Endothelial cell of umbilical vein (primary cell): ENCODE measurements at regions of chr19 and their contacts with region 1.

Region 1: GRCh38 chr19:15555759-15556633 is 47.7 kb downstream of the CYP4F22 start:
- DNase-seq: peak; percentile 96
- H3K4me3 ChIP-seq: peak overlapping the region in 1 of 3 experiments; percentile 6
- H3K27ac ChIP-seq: no peak overlapping the region
- H3K4me1 ChIP-seq: peaks cover 9% of the 10 kb centered on the region
- H3K27me3 ChIP-seq: peaks cover 0 to 1% of the 10 kb centered on the region in 2 experiments
- CTCF ChIP-seq: peak; percentile 92 to 96
- POLR2A ChIP-seq: no peak

Region 2: GRCh38 chr19:15101479-15102082 is 454.4 kb before region 1 on chr19:
- CTCF ChIA-PET with region 1: interaction called, 20 read pairs
- POLR2A ChIA-PET with region 1: no interaction called
- dilution Hi-C with region 1: no loop called
- intact Hi-C with region 1: loop called (anchors 1 kb)
- DNase-seq: peak; percentile 75
- H3K4me3 ChIP-seq: no peak overlapping the region
- H3K27ac ChIP-seq: no peak overlapping the region
- H3K4me1 ChIP-seq: peaks cover 3% of the 10 kb centered on the region
- H3K27me3 ChIP-seq: no peaks in the 10 kb centered on the region
- CTCF ChIP-seq: peak; percentile 79 to 85
- POLR2A ChIP-seq: no peak

Region 3: GRCh38 chr19:15161028-15161989 is 394.7 kb before region 1 on chr19:
- CTCF ChIA-PET with region 1: interaction called, 10 read pairs
- POLR2A ChIA-PET with region 1: interaction called, 6 read pairs
- dilution Hi-C with region 1: no loop called
- intact Hi-C with region 1: no loop called
- DNase-seq: no peak
- H3K4me3 ChIP-seq: no peak overlapping the region
- H3K27ac ChIP-seq: no peak overlapping the region
- H3K4me1 ChIP-seq: no peaks in the 10 kb centered on the region
- H3K27me3 ChIP-seq: no peaks in the 10 kb centered on the region
- CTCF ChIP-seq: peak; percentile 20 to 45
- POLR2A ChIP-seq: no peak

Region 4: GRCh38 chr19:15264061-15264932 is 291.7 kb before region 1 on chr19:
- CTCF ChIA-PET with region 1: interaction called, 5 read pairs
- POLR2A ChIA-PET with region 1: no interaction called
- dilution Hi-C with region 1: no loop called
- intact Hi-C with region 1: loop called (anchors 1 kb)
- DNase-seq: peak; percentile 51
- H3K4me3 ChIP-seq: no peak overlapping the region
- H3K27ac ChIP-seq: no peak overlapping the region
- H3K4me1 ChIP-seq: peaks cover 11% of the 10 kb centered on the region
- H3K27me3 ChIP-seq: no peaks in the 10 kb centered on the region
- CTCF ChIP-seq: peak; percentile 73 to 85
- POLR2A ChIP-seq: no peak

Region 5: GRCh38 chr19:15379083-15379995 is 176.7 kb before region 1 on chr19 and contains the start of gene AKAP8:
- CTCF ChIA-PET with region 1: interaction called, 25 read pairs
- POLR2A ChIA-PET with region 1: no interaction called
- dilution Hi-C with region 1: no loop called
- intact Hi-C with region 1: loop called (anchors 1 kb)
- DNase-seq: peak; percentile 99
- H3K4me3 ChIP-seq: peak within 1 kb of the TSS; percentile 82 to 90 (median 85)
- H3K27ac ChIP-seq: peak within 1 kb of the TSS; percentile 85
- H3K4me1 ChIP-seq: peaks cover 20% of the 10 kb centered on the region
- H3K27me3 ChIP-seq: no peaks in the 10 kb centered on the region
- CTCF ChIP-seq: no peak
- POLR2A ChIP-seq: peak; percentile 85
- total RNA-seq, gene AKAP8: 42.6 and 44.1 TPM in 2 replicates

Region 6: DNA sequence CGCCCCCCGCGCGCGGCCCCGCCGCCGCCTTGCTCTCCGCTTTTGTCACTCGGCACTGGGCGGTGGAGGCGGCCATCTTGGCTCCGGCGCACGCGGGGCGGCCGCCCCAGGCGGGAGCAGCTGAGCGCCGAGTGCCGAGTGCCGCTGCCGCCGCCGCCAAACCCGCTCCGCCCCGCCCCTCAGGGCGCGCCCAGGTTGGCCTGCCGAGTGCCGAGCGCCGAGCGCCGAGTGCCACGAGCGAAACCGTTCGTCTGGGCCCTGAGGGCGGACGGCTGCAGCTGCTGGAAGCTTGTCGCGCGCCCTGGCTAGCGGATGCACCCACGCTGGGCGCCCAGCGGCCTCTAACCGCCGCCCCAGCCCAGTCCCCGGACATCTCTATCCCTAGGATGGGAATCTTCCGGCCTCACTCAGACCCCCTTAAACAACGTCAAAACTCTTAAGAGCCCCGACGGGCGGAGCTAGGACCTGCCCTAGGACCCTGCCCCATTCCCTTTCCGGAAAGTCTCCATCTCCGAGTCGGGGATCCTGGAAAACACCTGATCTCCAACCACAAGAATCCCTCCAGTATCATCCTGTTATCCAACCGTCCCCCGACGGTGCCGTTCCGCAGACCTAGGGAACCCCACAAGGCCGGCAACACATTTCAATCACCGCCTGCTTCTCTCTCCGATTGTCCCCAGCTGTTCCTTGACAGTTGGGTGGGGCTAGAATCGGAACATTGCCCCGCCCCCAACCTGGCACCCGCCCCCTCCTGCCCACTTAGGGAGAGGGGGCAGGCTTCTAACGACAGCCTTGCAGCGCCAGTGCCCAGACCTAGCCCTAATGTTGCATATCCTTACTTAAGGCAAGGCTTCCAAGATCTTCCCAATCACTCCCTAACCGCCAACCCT is 123.1 kb before region 1 on chr19:
- CTCF ChIA-PET with region 1: interaction called, 18 read pairs
- POLR2A ChIA-PET with region 1: no interaction called
- dilution Hi-C with region 1: no loop called
- intact Hi-C with region 1: loop called (anchors 1 kb)
- DNase-seq: peak; percentile 88
- H3K4me3 ChIP-seq: peak overlapping the region; percentile 52 to 77 (median 71)
- H3K27ac ChIP-seq: peak overlapping the region; percentile 25
- H3K4me1 ChIP-seq: peaks cover 12% of the 10 kb centered on the region
- H3K27me3 ChIP-seq: no peaks in the 10 kb centered on the region
- CTCF ChIP-seq: no peak
- POLR2A ChIP-seq: peak; percentile 75

Region 7: DNA sequence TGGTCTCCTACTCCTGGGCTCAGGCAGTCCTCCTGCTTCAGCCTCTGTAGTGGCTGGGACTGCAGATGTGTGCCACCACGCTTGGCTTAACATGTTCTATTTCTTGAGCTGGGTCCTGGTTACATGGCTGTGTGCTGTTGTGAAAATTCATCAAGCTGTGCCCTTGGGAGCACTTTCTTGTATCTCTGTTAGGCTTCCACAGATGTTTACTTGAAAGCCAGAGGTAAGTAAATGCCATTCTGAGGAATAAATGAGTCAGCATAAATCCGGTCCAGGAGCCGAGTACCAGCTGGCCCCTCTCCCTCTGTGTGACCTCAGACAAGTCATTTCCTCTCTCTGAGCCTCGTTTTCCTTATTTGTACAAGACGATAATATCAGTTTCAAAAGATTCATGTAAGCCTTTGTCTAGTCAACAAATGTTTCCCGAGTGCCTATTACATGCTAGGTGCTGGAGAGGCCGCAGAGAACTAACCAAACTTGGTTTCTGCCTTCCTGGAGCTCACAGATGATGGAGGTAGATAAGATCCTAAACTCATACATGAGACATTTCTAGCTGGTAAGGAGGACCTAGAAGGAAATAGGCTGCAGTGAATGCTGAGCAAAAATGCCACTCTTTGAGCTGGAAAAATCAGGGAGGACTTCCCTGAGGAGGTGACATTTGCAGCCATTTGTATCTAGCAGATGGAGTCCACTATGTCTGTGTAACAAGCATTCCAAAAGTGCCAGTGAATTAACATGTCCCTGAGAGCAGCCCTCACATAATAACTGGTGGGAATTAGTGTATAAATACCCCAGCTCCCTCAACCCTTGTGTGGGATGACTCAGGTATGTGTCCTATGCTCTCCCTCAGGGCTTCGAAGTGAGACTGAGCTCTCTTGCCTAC is 88.9 kb before region 1 on chr19:
- CTCF ChIA-PET with region 1: interaction called, 7 read pairs
- POLR2A ChIA-PET with region 1: no interaction called
- dilution Hi-C with region 1: no loop called
- intact Hi-C with region 1: loop called (anchors 5 kb)
- DNase-seq: peak; percentile 99
- H3K4me3 ChIP-seq: no peak overlapping the region
- H3K27ac ChIP-seq: peak overlapping the region; percentile 41
- H3K4me1 ChIP-seq: peaks cover 39% of the 10 kb centered on the region
- H3K27me3 ChIP-seq: peaks cover 0 to 2% of the 10 kb centered on the region in 2 experiments
- CTCF ChIP-seq: no peak
- POLR2A ChIP-seq: peak; percentile 45

Region 8: GRCh38 chr19:15534957-15535864 is 20.8 kb before region 1 on chr19:
- CTCF ChIA-PET with region 1: no interaction called
- POLR2A ChIA-PET with region 1: no interaction called
- dilution Hi-C with region 1: no loop called
- intact Hi-C with region 1: no loop called
- DNase-seq: no peak
- H3K4me3 ChIP-seq: no peak overlapping the region
- H3K27ac ChIP-seq: no peak overlapping the region
- H3K4me1 ChIP-seq: no peaks in the 10 kb centered on the region
- H3K27me3 ChIP-seq: no peaks in the 10 kb centered on the region
- CTCF ChIP-seq: no peak
- POLR2A ChIP-seq: no peak

Region 9: DNA sequence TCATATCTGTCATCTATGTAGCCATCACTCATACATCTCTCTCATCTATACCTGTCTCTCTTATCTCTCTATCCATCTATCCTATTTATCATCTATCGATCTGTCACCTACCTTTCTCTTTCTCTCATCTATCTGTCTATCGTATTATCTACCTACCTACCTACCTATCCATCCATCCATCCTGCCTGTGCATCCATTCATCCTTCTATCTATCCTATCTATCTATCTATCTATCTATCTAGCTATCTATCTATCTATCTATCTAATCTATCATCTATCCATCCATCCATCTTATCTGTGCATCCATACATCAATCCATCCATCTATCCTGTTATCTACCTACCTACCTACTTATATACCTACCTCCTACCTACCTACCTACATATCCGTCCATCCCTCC is 14.4 kb after region 1 on chr19:
- CTCF ChIA-PET with region 1: no interaction called
- POLR2A ChIA-PET with region 1: no interaction called
- dilution Hi-C with region 1: no loop called
- intact Hi-C with region 1: no loop called
- DNase-seq: no peak
- H3K4me3 ChIP-seq: no peak overlapping the region
- H3K27ac ChIP-seq: no peak overlapping the region
- H3K4me1 ChIP-seq: no peaks in the 10 kb centered on the region
- H3K27me3 ChIP-seq: peaks cover 0 to 2% of the 10 kb centered on the region in 2 experiments
- CTCF ChIP-seq: no peak
- POLR2A ChIP-seq: no peak